ENCODE measurements at regions of chr6 and their contacts with region 1.

Region 1: DNA sequence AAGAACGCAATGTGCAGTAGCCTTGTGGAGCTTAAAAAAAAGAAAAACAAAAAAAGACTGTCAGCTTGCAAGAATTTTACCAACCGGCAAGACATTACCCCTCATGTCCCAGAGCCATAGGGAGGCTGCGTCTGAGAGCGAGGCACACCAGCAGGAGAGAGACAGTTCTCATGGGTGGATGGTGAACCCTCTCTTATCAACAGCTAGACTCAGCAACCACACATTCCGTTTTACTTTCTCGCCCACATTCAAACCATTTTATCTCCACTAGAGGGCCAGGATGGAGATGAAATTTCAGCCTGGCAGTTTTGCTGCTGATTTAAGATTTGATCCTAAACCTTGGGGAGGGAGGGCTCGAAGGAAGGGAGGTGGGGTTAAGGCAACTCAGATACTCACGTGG is 247.0 kb downstream of the ATXN1 start:
- DNase-seq: peak; percentile 90

Region 2: GRCh38 chr6:16228709-16229665 is 285.3 kb before region 1 on chr6:
- in situ Hi-C with region 1: no loop called
- DNase-seq: no peak

Region 3: DNA sequence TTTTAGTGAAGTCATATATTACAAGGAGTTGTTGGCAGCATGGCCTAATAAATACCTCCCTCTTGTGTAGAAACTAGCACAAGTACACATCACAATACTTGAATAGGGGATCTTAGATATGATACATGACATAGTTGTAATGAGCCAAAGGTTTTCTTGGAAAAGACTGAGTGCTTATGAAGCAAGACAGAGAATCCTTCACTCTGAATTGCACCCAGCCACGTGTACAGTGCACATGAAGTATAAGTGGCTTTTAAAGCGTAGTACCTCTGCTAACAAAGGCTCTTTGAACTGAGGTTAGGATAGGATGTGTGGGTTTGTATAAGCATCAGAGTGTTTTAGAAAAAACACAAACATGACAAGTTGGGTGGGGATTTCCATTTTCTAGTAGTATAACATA is 442.1 kb after region 1 on chr6:
- in situ Hi-C with region 1: loop called (anchors 10 kb)
- DNase-seq: peak; percentile 67